Activated T-helper 2 cell treated with anti-CD3 and anti-CD28 coated beads, Interferon-gamma antibody, Interleukin-2, Interleukin-4, amounts not matched to agents 10 μg/mL and 5 μg/mL and 100 μg/mL, durations not matched to agents 14 hours and 24 hours and 36 hours (primary cell): ENCODE measurements at regions of chr16 and their contacts with region 1.

Region 1: GRCh38 chr16:8621572-8622314 is at the start of gene METTL22:
- DNase-seq: peak; percentile 87
- H3K4me3 Mint-ChIP-seq: peak within 1 kb of the TSS; percentile 90
- H3K27ac Mint-ChIP-seq: peak within 1 kb of the TSS; percentile 80
- H3K4me1 Mint-ChIP-seq: peaks cover 19% of the 10 kb centered on the region
- H3K27me3 Mint-ChIP-seq: peaks cover 4% of the 10 kb centered on the region
- total RNA-seq, gene METTL22: 34.9 and 39.0 TPM in 2 replicates

Region 2: DNA sequence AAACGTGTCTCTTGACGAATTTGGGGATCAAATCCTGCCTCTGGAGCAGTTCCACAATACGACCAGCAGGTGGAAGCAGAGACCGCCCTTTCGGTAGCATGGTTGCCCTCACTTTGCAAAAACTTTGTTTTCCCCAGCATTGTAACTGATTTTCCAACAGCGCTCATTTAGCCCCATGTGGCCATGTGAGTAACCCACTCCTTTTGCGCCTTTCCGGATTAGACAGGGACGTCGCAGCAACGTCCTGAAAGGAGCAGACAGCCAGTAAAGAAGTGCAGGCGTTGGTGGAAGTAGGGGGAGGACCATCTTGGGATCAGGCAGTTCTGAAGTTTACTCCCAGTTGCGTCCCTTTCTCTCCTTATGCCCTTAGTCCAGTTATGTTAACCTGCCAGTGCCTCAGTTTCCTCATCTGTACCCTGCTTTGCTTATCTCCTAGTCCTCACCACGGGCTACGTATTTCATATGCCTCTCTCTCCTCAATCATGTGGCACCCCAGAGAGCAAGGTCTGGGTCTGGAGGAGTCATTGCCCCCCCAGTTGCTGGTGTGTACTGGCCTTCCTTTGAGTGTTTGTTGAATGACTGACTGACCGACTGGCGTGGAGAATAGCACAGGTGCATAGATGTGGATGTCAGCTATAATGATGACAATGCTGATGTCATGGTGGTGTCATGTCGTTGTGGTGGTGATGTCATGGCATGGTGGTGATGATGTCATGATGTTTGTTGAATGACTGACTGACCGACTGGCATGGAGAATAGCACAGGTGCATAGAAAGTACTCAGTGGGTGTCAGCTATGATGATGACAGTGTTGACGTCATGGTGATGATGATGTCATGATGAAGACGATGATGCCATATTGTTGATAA is 53.8 kb before region 1 on chr16:
- intact Hi-C with region 1: loop called (anchors 5 kb)
- DNase-seq: peak; percentile 71
- H3K4me3 Mint-ChIP-seq: no peak overlapping the region
- H3K27ac Mint-ChIP-seq: no peak overlapping the region
- H3K4me1 Mint-ChIP-seq: peaks cover 6% of the 10 kb centered on the region
- H3K27me3 Mint-ChIP-seq: no peaks in the 10 kb centered on the region

Region 3: DNA sequence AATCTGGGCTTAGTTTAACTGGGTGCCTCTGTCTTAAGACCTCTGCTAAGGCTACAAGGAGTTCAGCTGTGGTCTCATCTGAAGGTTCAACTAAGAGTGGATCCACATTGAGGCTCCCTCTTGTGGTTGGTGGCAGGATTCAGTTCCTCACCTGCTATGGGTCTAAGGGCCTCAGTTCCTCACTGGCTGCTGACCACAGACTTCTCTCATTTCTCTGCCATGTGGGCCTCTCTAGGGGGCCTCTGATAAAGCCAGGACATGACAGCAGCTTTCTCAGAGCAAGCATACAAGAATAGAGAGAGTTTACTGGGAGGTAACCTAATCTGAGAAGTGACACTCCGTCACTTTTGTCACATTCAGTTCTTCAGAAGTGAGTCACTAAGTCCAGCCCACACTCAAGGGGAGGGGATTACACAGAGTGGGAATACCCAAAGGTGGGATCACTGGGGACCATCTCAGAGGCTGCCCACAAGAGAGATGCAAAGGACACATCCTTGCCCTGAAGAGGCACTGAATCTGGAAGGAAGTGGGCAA is 33.5 kb after region 1 on chr16:
- intact Hi-C with region 1: loop called (anchors 2 kb)
- DNase-seq: peak; percentile 21
- H3K4me3 Mint-ChIP-seq: no peak overlapping the region
- H3K27ac Mint-ChIP-seq: peak overlapping the region; percentile 62
- H3K4me1 Mint-ChIP-seq: peaks cover 14% of the 10 kb centered on the region
- H3K27me3 Mint-ChIP-seq: no peaks in the 10 kb centered on the region

Region 4: DNA sequence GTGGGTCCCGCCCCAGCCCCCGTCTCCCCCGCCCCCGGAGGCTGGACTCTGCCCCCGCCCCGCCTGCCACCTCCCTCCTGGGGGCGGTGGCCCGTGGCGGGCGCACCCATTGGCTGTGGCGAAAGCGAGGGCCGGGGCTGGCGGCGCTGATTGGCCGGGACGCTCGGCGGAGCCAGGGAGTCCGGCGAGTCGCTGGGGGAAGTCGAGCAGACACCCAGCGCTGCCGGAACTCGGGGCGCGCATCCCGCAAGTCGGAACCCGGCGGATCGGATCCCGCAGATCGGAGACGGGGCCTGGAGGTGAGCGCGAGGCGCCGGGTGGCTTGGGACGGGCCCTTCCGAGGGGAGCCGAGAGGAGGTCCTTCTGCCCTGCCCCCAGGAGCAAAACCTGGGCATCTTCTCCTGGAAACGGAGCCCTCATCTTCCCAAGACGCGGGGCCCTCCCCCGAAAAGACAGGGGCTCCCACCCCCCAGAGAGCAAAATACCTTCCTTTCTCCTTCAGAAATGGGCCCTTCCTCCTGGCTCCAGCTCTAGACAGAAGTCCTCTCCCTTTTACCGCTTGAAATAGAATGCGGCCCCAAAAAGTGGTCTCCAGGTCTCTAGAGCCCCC is 52.8 kb after region 1 on chr16 and contains the start of gene ABAT:
- intact Hi-C with region 1: loop called (anchors 1 kb)
- DNase-seq: peak; percentile 90
- H3K4me3 Mint-ChIP-seq: peak within 1 kb of the TSS; percentile 95
- H3K27ac Mint-ChIP-seq: peak within 1 kb of the TSS; percentile 95
- H3K4me1 Mint-ChIP-seq: peaks cover 38% of the 10 kb centered on the region
- H3K27me3 Mint-ChIP-seq: no peaks in the 10 kb centered on the region
- total RNA-seq, gene ABAT: 22.5 and 24.2 TPM in 2 replicates

Region 5: DNA sequence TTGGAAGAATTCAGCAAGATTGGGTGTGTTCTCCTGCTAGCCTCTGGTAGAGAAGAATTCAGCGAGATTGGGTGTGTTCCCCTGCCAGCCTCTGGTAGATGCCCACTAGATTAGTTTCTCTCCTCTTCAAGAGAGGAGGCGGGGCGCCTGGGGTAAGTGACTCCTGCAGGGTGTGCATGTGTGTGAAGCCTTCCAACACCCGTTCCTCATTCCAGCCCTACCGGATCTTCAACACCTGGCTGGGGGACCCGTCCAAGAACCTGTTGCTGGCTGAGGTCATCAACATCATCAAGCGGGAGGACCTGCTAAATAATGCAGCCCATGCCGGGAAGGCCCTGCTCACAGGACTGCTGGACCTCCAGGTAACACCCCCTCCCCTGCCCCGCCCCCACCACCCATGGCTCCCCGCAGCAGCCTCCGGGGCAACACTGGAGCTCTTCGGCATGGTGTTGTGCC is 154.4 kb after region 1 on chr16:
- intact Hi-C with region 1: no loop called
- DNase-seq: no peak
- H3K4me3 Mint-ChIP-seq: no peak overlapping the region
- H3K27ac Mint-ChIP-seq: no peak overlapping the region
- H3K4me1 Mint-ChIP-seq: no peaks in the 10 kb centered on the region
- H3K27me3 Mint-ChIP-seq: no peaks in the 10 kb centered on the region

Region 6: DNA sequence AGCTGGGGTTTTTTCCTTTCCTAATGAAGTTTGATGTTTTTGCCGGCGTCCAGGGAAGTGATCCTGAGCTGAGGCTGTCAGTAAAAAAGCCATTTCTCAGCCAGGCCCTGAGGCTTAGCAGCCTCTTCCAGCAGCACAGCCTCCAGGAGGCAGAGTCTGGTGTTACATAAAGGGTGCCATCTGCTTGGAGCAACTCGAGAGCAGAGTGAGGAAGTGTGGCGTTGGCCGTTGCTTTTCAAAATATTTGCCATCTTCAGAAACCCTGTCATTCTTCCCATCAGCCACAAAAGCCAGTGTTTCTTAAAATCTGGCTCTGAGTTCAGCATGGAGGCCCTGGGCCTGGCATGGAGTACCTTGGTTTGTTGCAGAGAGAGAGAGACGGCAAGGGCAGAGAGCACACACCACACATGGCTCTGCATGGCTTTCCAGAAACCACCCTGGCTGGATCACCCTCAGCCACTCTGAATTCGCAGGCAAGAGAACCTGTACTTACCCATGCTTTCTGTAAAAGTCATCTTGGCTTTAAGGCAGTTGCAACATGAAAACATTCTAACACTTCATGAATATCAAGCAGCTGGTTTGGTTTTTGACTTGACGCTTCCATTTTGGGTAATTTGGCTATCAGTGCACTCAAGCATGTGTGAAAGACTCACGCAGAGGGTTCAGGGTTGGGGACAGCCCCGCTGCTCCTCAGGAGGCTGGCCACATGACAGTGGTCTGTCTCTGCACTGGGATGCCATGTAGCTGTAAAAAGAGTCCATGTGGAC is 196.9 kb after region 1 on chr16:
- intact Hi-C with region 1: no loop called
- DNase-seq: no peak
- H3K4me3 Mint-ChIP-seq: no peak overlapping the region
- H3K27ac Mint-ChIP-seq: no peak overlapping the region
- H3K4me1 Mint-ChIP-seq: peaks cover 39% of the 10 kb centered on the region
- H3K27me3 Mint-ChIP-seq: no peaks in the 10 kb centered on the region

Region 7: DNA sequence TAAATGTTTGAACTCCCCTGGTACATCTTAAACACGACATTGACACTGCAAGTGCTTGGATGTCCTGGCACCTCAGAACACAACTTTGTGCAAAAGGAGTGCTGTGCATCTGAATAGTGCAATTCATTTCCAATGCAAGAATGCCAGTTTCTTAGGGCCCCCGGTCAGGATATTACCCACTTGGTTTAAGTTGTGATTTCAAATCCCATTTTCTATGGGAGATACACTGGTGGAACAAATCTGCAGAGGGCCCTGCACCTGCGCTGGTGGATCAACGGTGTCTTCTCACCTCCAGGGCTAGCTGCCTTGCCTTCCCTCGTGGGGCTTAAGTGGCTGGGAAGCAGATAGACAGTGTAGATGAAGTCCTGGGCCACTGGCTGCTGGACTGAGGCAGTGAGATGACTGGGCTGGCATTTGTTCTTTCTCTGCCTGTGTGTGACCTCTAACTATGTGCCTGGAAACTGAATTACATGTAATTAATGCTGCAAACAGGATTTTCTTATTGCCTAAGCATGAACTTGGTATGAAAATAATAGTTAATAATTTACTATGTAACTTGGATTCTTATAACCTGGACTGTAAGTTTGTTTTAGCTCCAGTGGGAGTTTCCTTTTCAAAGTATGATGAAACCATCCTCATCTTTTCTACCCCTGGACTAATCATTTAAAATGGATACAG is 490.6 kb after region 1 on chr16:
- intact Hi-C with region 1: no loop called
- DNase-seq: no peak
- H3K4me3 Mint-ChIP-seq: no peak overlapping the region
- H3K27ac Mint-ChIP-seq: no peak overlapping the region
- H3K4me1 Mint-ChIP-seq: peaks cover 61% of the 10 kb centered on the region
- H3K27me3 Mint-ChIP-seq: no peaks in the 10 kb centered on the region